ENCODE measurements at regions of chr4 and their contacts with region 1.

Region 1: GRCh38 chr4:14368391-14368790 is 633.9 kb upstream of the CPEB2 start:
- DNase-seq: no peak
- ATAC-seq: no peak
- H3K4me3 ChIP-seq: no peak overlapping the region
- H3K27ac ChIP-seq: no peak overlapping the region
- H3K4me1 ChIP-seq: no peaks in the 10 kb centered on the region
- H3K27me3 ChIP-seq: no peaks in the 10 kb centered on the region

Region 2: DNA sequence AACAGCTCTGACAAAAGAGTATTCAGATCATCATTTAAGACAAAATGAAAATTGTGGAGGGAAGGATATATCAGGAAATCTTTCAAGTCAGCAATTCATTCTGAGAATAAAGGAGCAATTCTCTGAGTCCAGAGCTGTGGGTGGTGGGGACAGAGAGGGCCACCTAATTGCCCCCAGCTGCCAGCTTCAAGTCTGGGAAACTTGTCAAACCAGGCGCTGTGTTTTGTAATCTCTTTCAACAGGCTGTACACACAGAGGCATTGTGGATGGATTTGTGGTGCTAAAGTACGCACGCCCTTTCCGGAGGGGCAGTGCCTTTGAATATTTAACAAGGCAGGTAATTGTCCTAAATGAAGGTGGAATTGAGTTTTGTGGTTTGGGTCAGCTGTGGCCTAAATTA is 149.8 kb before region 1 on chr4:
- intact Hi-C with region 1: no loop called
- DNase-seq: no peak
- ATAC-seq: no peak
- H3K4me3 ChIP-seq: no peak overlapping the region
- H3K27ac ChIP-seq: no peak overlapping the region
- H3K4me1 ChIP-seq: peaks cover 0 to 5% of the 10 kb centered on the region in 2 donors
- H3K27me3 ChIP-seq: no peaks in the 10 kb centered on the region

Region 3: DNA sequence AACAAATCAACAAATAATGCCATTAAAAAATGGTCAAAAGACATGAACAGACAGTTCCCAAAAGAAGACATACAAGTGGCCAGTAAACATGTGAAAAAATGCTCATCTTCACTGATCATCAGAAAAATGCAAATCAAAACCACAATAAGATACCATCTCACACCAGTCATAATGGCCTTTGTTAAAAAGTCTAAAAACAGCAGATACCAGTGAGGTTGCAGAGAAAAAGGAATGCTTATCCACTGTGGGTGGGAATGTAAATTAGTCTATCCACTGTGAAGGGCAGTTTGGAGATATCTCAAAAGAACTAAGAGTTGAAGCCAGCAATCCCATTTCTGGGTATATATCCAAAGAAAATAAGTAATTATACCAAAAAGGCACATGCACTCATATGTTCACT is 34.2 kb before region 1 on chr4:
- intact Hi-C with region 1: loop called in 1 of 2 experiments (anchors 5 kb)
- DNase-seq: no peak
- ATAC-seq: no peak
- H3K4me3 ChIP-seq: no peak overlapping the region
- H3K27ac ChIP-seq: no peak overlapping the region
- H3K4me1 ChIP-seq: no peaks in the 10 kb centered on the region
- H3K27me3 ChIP-seq: no peaks in the 10 kb centered on the region

Measured in aorta (tissue), 5 donors.